ENCODE measurements at regions of chr16 and their contacts with region 1.

Region 1: GRCh38 chr16:74034862-74035261 is 261.8 kb upstream of the PSMD7 start:
- DNase-seq: peak; percentile 57
- H3K4me3 ChIP-seq: no peak overlapping the region
- H3K27ac ChIP-seq: no peak overlapping the region
- H3K4me1 ChIP-seq: no peaks in the 10 kb centered on the region
- H3K27me3 ChIP-seq: no peaks in the 10 kb centered on the region
- CTCF ChIP-seq: peak; percentile 50
- EP300 ChIP-seq: no peak
- RAD21 ChIP-seq: peak; percentile 79

Region 2: DNA sequence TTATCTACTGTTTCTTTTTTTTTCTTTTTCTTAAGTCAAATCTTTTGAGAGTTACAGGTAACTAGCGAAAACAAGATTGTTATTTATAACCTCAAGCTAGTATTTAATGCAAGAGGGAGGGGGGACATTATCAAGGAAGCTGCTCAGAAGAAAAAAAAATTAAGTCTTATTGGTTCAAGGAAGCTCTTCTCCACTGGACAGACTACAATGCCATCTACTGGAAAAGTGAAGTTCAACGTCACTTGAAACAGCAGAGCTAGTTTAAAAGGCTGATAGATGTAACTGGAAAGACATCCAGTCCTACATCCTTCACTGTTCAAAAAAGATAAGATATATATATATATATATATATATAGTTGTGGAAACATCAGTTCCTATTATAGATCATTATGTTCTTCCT is 156.3 kb before region 1 on chr16:
- CTCF ChIA-PET with region 1: interaction called, 12 read pairs
- POLR2A ChIA-PET with region 1: no interaction called
- DNase-seq: peak; percentile 46
- H3K4me3 ChIP-seq: no peak overlapping the region; a peak in 1 of 4 replicates
- H3K27ac ChIP-seq: no peak overlapping the region
- H3K4me1 ChIP-seq: peaks cover 0 to 3% of the 10 kb centered on the region in 2 experiments; a peak in 2 of 4 replicates
- H3K27me3 ChIP-seq: no peaks in the 10 kb centered on the region
- CTCF ChIP-seq: peak; percentile 66
- EP300 ChIP-seq: no peak
- RAD21 ChIP-seq: peak; percentile 94

Region 3: GRCh38 chr16:73912281-73912680 is 122.6 kb before region 1 on chr16:
- CTCF ChIA-PET with region 1: no interaction called
- POLR2A ChIA-PET with region 1: no interaction called
- DNase-seq: no peak
- H3K4me3 ChIP-seq: no peak overlapping the region
- H3K27ac ChIP-seq: no peak overlapping the region
- H3K4me1 ChIP-seq: no peaks in the 10 kb centered on the region
- H3K27me3 ChIP-seq: no peaks in the 10 kb centered on the region
- CTCF ChIP-seq: no peak
- EP300 ChIP-seq: no peak
- RAD21 ChIP-seq: no peak

Region 4: GRCh38 chr16:73976644-73977043 is 58.2 kb before region 1 on chr16:
- CTCF ChIA-PET with region 1: interaction called, 12 read pairs
- POLR2A ChIA-PET with region 1: no interaction called
- DNase-seq: no peak
- H3K4me3 ChIP-seq: no peak overlapping the region
- H3K27ac ChIP-seq: no peak overlapping the region
- H3K4me1 ChIP-seq: peaks cover 0 to 7% of the 10 kb centered on the region in 2 experiments; a peak in 2 of 4 replicates
- H3K27me3 ChIP-seq: no peaks in the 10 kb centered on the region
- CTCF ChIP-seq: no peak
- EP300 ChIP-seq: no peak
- RAD21 ChIP-seq: no peak

Region 5: DNA sequence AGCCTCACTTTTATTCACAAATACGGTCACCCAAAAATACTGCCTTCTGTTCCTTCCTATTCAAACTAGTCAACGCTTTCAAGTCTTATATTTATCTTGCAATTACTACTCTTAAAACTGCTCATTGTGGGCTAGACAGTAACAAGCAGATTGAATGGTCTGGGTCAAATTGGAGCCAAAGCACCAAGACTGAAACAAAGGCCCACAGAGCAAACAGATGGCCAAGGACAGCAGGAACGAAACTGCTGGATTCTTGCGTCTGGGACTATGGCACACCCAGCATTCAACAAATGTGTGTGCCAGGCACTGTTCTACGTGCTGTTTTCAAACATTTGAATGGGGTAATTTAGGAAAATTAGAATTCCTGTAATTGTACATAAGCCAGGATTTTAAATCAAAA is 11.7 kb after region 1 on chr16:
- CTCF ChIA-PET with region 1: interaction called, 40 read pairs
- POLR2A ChIA-PET with region 1: no interaction called
- DNase-seq: no peak
- H3K4me3 ChIP-seq: no peak overlapping the region
- H3K27ac ChIP-seq: no peak overlapping the region
- H3K4me1 ChIP-seq: no peaks in the 10 kb centered on the region
- H3K27me3 ChIP-seq: no peaks in the 10 kb centered on the region
- CTCF ChIP-seq: no peak
- EP300 ChIP-seq: no peak
- RAD21 ChIP-seq: no peak

Region 6: GRCh38 chr16:74064120-74064735 is 29.4 kb after region 1 on chr16:
- CTCF ChIA-PET with region 1: interaction called, 17 read pairs
- POLR2A ChIA-PET with region 1: no interaction called
- DNase-seq: peak; percentile 55
- H3K4me3 ChIP-seq: no peak overlapping the region
- H3K27ac ChIP-seq: no peak overlapping the region
- H3K4me1 ChIP-seq: no peaks in the 10 kb centered on the region; a peak in 1 of 4 replicates
- H3K27me3 ChIP-seq: no peaks in the 10 kb centered on the region
- CTCF ChIP-seq: no peak; the same call in 1 of the 2 replicates
- EP300 ChIP-seq: no peak
- RAD21 ChIP-seq: peak; percentile 80

Region 7: GRCh38 chr16:74111456-74111982 is 76.7 kb after region 1 on chr16:
- CTCF ChIA-PET with region 1: no interaction called
- POLR2A ChIA-PET with region 1: no interaction called
- DNase-seq: no peak
- H3K4me3 ChIP-seq: no peak overlapping the region
- H3K27ac ChIP-seq: no peak overlapping the region
- H3K4me1 ChIP-seq: no peaks in the 10 kb centered on the region
- H3K27me3 ChIP-seq: no peaks in the 10 kb centered on the region
- CTCF ChIP-seq: no peak
- EP300 ChIP-seq: no peak
- RAD21 ChIP-seq: no peak

Region 8: DNA sequence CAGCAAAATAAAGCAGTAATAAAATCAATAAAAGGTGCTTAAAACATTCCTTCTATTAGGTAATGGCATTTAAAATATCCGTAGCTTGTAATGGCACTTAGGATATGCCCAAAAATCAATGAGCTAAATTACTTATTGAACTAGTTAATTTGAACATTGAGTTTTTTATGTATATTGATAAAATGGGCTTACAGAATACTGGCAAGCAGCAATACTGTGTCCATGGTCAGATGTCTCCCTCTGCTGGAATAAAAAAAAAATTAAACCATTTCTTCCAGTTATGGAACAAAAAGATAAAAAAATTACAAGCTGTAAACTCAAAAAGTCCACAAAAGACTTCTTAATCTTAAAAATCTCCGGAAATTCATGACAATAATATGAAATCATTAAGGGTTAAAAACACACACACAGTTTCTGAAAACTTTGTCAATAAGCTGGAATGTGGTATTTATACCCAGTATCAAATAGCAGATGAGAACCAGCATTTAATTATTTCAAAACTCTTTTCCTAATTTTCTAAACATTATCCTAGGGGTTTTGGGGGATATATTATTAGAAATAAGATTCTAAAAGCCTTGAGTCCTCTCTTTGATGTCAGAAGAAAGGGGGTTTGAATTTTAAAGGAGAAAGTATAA is 240.3 kb after region 1 on chr16:
- CTCF ChIA-PET with region 1: interaction called, 35 read pairs
- POLR2A ChIA-PET with region 1: no interaction called
- DNase-seq: peak; percentile 46
- H3K4me3 ChIP-seq: no peak overlapping the region; a peak in 1 of 4 replicates
- H3K27ac ChIP-seq: no peak overlapping the region
- H3K4me1 ChIP-seq: no peaks in the 10 kb centered on the region
- H3K27me3 ChIP-seq: no peaks in the 10 kb centered on the region
- CTCF ChIP-seq: peak; percentile 72
- EP300 ChIP-seq: no peak
- RAD21 ChIP-seq: peak; percentile 85

Measured in SK-N-SH (cell line).